Dendritic cell treated with granulocyte-macrophage colony-stimulating factor and Interleukin-4, amounts not matched to agents 40 ng/mL and 50 ng/mL, for 4 days (primary cell): ENCODE measurements at regions of chr5 and their contacts with region 1.

Region 1: DNA sequence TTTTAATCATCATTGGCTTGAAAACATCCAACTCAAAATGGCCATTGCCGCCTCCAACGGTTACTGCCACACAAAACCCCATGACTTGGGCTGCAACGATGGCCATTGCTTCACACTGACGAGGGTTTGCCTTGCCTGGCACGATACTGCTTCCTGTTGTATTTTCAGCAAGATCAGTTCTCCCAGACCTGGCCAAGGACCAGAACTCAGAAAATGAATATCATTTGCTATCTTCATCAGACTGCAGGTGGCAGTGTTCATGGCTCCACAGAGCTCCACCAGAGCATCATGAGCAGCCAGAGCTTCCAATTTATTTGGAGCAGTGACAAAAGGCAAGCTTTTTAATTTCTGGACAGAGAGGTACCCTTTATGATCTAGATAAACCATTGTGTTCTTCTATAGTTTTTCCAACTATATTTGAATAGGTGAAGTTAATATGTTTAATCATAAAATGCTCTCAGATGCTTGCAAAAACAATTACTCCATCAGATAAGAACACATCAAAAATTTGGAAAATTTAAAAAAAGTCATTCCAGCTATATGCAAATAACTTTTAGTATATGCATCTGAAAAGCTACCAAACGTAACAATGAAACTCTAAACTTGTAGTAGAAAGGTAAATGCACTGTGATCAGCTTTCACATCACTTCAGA is 10.4 kb downstream of the AMACR start:
- H3K4me3 Mint-ChIP-seq: no peak overlapping the region
- H3K27ac Mint-ChIP-seq: no peak overlapping the region
- H3K4me1 Mint-ChIP-seq: no peaks in the 10 kb centered on the region
- H3K27me3 Mint-ChIP-seq: no peaks in the 10 kb centered on the region

Region 2: DNA sequence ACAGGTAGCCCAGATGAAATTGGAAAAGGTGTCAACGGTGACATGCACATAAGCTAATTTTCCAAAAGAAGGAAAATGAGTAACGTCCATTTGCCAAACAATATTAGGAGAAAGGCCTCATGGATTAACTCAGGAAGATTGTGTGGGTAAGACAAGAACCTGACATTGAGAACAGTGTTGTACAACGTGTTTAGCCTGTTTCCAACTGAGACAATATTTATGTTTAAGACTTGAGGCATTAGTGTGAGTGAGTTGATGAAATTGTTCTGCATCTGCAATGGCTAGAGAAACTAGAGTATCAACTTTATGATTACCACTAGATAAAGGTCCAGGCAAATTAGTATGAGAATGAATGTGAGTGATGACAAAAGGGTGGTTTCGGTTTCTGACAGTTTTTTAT is 467.4 kb after region 1 on chr5:
- intact Hi-C with region 1: loop called (anchors 2 kb)
- H3K4me3 Mint-ChIP-seq: no peak overlapping the region
- H3K27ac Mint-ChIP-seq: no peak overlapping the region
- H3K4me1 Mint-ChIP-seq: no peaks in the 10 kb centered on the region
- H3K27me3 Mint-ChIP-seq: no peaks in the 10 kb centered on the region